Activated CD4-positive, alpha-beta memory T cell treated with anti-CD3 and anti-CD28 coated beads, Interleukin-2, amount 10 ng/mL, durations not matched to agents 7 days and 5 days (primary cell): ENCODE measurements at regions of chr7 and their contacts with region 1.

Region 1: DNA sequence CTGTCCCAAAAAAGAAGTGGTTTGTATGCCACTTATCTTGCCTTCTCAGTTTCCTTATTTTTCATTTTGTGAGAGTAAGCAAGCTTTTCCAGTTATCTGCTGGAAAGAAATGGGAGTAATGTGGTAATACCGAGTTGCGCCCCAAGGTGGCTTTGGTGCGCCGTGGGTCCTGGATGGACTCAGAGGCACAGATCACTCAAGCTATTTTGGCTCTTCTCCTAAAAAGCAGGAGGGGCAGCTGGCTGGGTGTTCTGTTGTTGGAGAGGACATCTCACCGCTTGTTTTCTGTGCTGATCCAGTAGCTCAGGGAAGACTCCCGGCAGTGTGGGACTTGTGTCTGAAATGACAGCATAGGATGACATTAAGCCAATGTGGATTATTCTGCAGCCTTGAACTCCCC is 16.4 kb downstream of the PRKRIP1 start:
- DNase-seq: peak; percentile 51
- H3K4me3 Mint-ChIP-seq: no peak overlapping the region
- H3K27ac Mint-ChIP-seq: no peak overlapping the region
- H3K4me1 Mint-ChIP-seq: peaks cover 64% of the 10 kb centered on the region
- H3K27me3 Mint-ChIP-seq: no peaks in the 10 kb centered on the region

Region 2: GRCh38 chr7:102024769-102025391 is 387.7 kb before region 1 on chr7:
- CTCF ChIA-PET with region 1: no interaction called
- POLR2A ChIA-PET with region 1: no interaction called
- DNase-seq: no peak
- H3K4me3 Mint-ChIP-seq: no peak overlapping the region
- H3K27ac Mint-ChIP-seq: no peak overlapping the region
- H3K4me1 Mint-ChIP-seq: peaks cover 4% of the 10 kb centered on the region
- H3K27me3 Mint-ChIP-seq: no peaks in the 10 kb centered on the region

Region 3: GRCh38 chr7:102125127-102125561 is 287.4 kb before region 1 on chr7:
- CTCF ChIA-PET with region 1: no interaction called
- POLR2A ChIA-PET with region 1: no interaction called
- DNase-seq: no peak
- H3K4me3 Mint-ChIP-seq: no peak overlapping the region
- H3K27ac Mint-ChIP-seq: no peak overlapping the region
- H3K4me1 Mint-ChIP-seq: peaks cover 12% of the 10 kb centered on the region
- H3K27me3 Mint-ChIP-seq: no peaks in the 10 kb centered on the region

Region 4: DNA sequence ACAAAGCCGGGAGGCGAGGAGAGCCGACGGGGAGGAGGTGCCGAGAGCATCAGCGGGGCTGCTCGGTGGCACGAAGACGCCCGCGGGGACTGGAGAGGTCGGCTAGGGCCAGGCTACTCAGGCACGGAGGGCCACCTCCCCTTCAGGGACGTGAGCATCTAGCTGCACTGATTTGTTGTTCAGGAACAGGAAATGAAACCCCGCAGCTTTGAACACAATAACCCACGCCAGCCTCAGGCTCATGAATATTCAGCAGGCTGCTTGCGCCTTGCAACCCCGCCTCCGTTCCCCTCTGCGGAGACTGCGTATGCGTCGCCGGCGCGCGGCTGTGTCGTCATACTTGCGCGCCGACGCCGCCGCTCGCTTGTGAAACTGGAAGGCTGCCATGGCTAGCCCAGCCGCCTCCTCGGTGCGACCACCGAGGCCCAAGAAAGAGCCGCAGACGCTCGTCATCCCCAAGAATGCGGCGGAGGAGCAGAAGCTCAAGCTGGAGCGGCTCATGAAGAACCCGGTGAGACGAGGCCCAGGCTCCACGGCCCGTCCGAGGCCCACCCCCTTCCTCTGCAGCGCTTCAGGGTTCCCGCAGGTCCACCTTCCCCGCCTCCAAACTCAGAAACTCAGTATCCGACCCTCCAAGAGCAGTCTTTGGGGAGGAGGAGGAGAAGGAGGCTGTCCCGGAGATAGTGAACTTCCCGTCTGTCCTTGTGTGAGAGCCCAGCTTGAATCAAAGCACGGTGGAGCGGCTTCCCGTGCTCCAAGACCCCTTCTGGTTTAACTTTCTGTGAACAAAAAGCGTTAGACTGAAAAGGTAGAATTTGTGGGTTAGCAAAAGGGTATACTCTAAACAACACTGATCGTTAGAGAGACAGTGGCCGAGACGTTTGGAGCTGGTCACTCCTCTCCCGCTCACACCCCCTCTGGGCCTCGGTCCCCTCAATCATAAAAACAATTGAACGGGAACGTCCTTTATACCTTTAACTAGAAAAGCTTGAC is 16.2 kb before region 1 on chr7 and contains the start of gene PRKRIP1:
- CTCF ChIA-PET with region 1: interaction called, 6 read pairs
- POLR2A ChIA-PET with region 1: interaction called, 19 read pairs
- DNase-seq: peak; percentile 90
- H3K4me3 Mint-ChIP-seq: peak within 1 kb of the TSS; percentile 91
- H3K27ac Mint-ChIP-seq: peak within 1 kb of the TSS; percentile 77
- H3K4me1 Mint-ChIP-seq: peaks cover 22% of the 10 kb centered on the region
- H3K27me3 Mint-ChIP-seq: no peaks in the 10 kb centered on the region
- total RNA-seq, gene PRKRIP1: 27.2 to 28.3 TPM

Region 5: DNA sequence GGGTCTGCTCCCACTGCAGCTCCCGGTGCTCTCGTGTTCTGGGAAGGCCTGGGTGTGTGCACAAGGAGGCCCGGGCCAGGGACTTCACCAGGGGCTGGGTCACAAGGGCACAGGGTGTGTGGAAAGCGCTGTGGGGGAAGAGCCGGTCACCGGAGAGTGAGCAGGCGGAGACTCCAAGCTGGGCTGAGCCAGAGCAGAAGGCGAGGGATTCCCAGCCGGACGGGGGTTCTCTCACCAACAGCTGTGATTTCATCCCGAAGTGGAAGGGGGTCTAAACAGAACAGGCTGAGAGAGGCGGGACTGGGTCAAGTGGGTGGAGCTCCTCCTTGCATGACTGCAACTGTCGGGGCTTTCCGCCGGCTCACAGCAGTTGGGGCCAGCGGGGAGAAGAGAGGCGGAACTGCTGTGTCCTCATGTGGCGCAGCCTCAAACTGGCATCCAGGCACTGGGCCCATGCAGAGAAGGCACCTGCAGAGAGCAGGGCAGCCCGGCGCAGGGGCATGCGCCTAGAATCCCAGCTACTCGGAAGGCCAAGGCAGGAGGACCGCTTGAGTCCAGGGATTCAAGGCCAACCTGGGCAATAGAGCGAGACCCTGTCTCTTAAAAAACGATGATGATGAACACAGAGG is 13.2 kb after region 1 on chr7:
- CTCF ChIA-PET with region 1: interaction called, 26 read pairs
- POLR2A ChIA-PET with region 1: interaction called, 226 read pairs
- DNase-seq: peak; percentile 88
- H3K4me3 Mint-ChIP-seq: peak overlapping the region; percentile 78
- H3K27ac Mint-ChIP-seq: peak overlapping the region; percentile 98
- H3K4me1 Mint-ChIP-seq: peaks cover 68% of the 10 kb centered on the region
- H3K27me3 Mint-ChIP-seq: no peaks in the 10 kb centered on the region

Region 6: GRCh38 chr7:102433219-102434038 is 20.9 kb after region 1 on chr7 and contains the start of gene ORAI2:
- CTCF ChIA-PET with region 1: interaction called, 26 read pairs
- POLR2A ChIA-PET with region 1: interaction called, 226 read pairs
- DNase-seq: peak; percentile 88
- H3K4me3 Mint-ChIP-seq: peak within 1 kb of the TSS; percentile 74
- H3K27ac Mint-ChIP-seq: peak within 1 kb of the TSS; percentile 94
- H3K4me1 Mint-ChIP-seq: peaks cover 57% of the 10 kb centered on the region
- H3K27me3 Mint-ChIP-seq: no peaks in the 10 kb centered on the region
- total RNA-seq, gene ORAI2: 59.5 to 61.9 TPM

Region 7: DNA sequence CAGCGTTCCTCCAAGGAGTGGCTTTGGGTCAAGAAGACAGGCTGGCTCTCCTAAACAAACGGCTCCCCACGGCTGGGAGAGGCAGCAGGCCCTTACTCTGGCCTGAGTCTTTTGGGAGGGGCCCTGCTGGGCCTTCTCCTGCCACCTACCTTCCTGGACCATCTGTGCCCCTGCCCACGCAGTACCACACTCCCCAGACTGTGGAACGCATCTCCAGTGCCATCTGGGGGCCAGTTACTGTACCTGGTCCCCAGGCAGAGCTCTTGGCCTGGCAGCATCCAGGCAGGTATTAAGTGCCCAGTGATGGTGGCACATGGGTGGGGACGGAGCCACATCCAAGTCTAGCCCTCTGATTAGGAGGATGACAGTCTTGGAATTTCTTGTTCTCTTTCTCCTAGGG is 37.7 kb after region 1 on chr7:
- CTCF ChIA-PET with region 1: interaction called, 30 read pairs
- POLR2A ChIA-PET with region 1: interaction called, 3 read pairs
- DNase-seq: peak; percentile 48
- H3K4me3 Mint-ChIP-seq: no peak overlapping the region
- H3K27ac Mint-ChIP-seq: no peak overlapping the region
- H3K4me1 Mint-ChIP-seq: no peaks in the 10 kb centered on the region
- H3K27me3 Mint-ChIP-seq: no peaks in the 10 kb centered on the region

Region 8: GRCh38 chr7:102464577-102465280 is 52.2 kb after region 1 on chr7 and contains the starts of genes ALKBH4 and LRWD1:
- CTCF ChIA-PET with region 1: interaction called, 26 read pairs
- POLR2A ChIA-PET with region 1: interaction called, 18 read pairs
- DNase-seq: peak; percentile 94
- H3K4me3 Mint-ChIP-seq: peak within 1 kb of the TSS; percentile 96
- H3K27ac Mint-ChIP-seq: peak within 1 kb of the TSS; percentile 80
- H3K4me1 Mint-ChIP-seq: peaks cover 29% of the 10 kb centered on the region
- H3K27me3 Mint-ChIP-seq: no peaks in the 10 kb centered on the region
- total RNA-seq, gene ALKBH4: 9.4 to 10.4 TPM
- total RNA-seq, gene LRWD1: 19.5 to 19.8 TPM